ENCODE measurements at regions of chr17 and their contacts with region 1.

Region 1: GRCh38 chr17:2244545-2245525 is 58.8 kb downstream of the SMG6 start:
- DNase-seq: peak; percentile 87
- H3K4me3 ChIP-seq: no peak overlapping the region; a peak in 1 of 4 replicates
- H3K27ac ChIP-seq: peak overlapping the region; percentile 18 to 67; a peak in 3 of 4 replicates
- H3K4me1 ChIP-seq: peaks cover 7 to 15% of the 10 kb centered on the region in 2 experiments; a peak in 1 of 4 replicates
- H3K27me3 ChIP-seq: no peaks in the 10 kb centered on the region
- CTCF ChIP-seq: peak; percentile 96
- EP300 ChIP-seq: no peak
- RAD21 ChIP-seq: peak; percentile 98

Region 2: GRCh38 chr17:2049333-2050299 is 195.2 kb before region 1 on chr17:
- CTCF ChIA-PET with region 1: interaction called, 185 read pairs
- POLR2A ChIA-PET with region 1: interaction called, 9 read pairs
- DNase-seq: peak; percentile 95
- H3K4me3 ChIP-seq: peak overlapping the region; percentile 75 to 80
- H3K27ac ChIP-seq: peak overlapping the region; percentile 60 to 72
- H3K4me1 ChIP-seq: peaks cover 4 to 15% of the 10 kb centered on the region in 2 experiments; a peak in 2 of 4 replicates
- H3K27me3 ChIP-seq: no peaks in the 10 kb centered on the region
- CTCF ChIP-seq: no peak
- EP300 ChIP-seq: no peak
- RAD21 ChIP-seq: no peak

Region 3: DNA sequence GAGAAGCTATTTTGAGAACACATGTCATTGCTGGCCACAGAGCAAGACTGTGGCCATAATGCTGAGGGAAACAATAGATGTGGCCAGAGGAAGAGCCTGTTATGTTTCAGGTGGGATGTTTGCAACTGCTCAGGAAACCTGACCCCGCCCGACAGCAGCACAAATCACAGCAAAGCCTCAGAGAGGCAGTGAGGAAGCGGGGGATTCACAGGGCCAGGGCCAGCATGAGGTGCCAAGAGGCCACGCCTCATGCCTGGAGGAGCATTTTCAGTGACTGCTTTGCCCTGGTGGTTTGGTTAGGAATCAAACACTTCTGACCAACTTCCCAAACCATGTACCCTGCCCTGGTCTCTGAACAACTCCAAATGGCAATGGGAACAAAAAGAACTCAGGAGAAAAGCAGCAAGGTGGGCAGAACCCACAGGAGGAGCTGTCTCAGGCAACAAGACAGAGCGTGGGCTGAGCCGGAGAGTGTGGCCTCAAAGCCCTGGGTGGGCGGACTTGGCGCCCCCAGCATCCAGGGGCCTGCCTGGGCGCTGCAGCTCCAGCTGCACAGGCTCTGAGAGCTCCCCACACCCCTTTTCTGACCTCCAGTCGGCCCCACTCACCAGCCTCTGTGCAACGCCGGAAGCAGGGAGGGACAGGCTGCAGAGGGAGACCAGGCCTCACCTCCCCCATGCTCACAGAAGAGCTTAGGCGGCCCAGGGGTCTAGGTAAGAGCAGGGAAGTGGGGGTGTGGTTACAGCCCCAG is 169.3 kb before region 1 on chr17:
- CTCF ChIA-PET with region 1: interaction called, 25 read pairs
- POLR2A ChIA-PET with region 1: no interaction called
- DNase-seq: peak; percentile 78
- H3K4me3 ChIP-seq: no peak overlapping the region
- H3K27ac ChIP-seq: peak overlapping the region in 1 of 2 experiments; percentile 95; a peak in 2 of 4 replicates
- H3K4me1 ChIP-seq: peaks cover 0 to 46% of the 10 kb centered on the region in 2 experiments; a peak in 1 of 4 replicates
- H3K27me3 ChIP-seq: no peaks in the 10 kb centered on the region
- CTCF ChIP-seq: no peak
- EP300 ChIP-seq: peak in 1 of 2 experiments; percentile 44; a peak in 1 of 4 replicates
- RAD21 ChIP-seq: peak; percentile 30; the same call in 1 of the 2 replicates

Region 4: GRCh38 chr17:2137342-2138098 is 107.3 kb before region 1 on chr17:
- CTCF ChIA-PET with region 1: interaction called, 14 read pairs
- POLR2A ChIA-PET with region 1: no interaction called
- DNase-seq: no peak
- H3K4me3 ChIP-seq: no peak overlapping the region
- H3K27ac ChIP-seq: peak overlapping the region; percentile 69 to 85; a peak in 3 of 4 replicates
- H3K4me1 ChIP-seq: peaks cover 24 to 26% of the 10 kb centered on the region in 2 experiments
- H3K27me3 ChIP-seq: no peaks in the 10 kb centered on the region
- CTCF ChIP-seq: no peak
- EP300 ChIP-seq: no peak
- RAD21 ChIP-seq: no peak

Region 5: DNA sequence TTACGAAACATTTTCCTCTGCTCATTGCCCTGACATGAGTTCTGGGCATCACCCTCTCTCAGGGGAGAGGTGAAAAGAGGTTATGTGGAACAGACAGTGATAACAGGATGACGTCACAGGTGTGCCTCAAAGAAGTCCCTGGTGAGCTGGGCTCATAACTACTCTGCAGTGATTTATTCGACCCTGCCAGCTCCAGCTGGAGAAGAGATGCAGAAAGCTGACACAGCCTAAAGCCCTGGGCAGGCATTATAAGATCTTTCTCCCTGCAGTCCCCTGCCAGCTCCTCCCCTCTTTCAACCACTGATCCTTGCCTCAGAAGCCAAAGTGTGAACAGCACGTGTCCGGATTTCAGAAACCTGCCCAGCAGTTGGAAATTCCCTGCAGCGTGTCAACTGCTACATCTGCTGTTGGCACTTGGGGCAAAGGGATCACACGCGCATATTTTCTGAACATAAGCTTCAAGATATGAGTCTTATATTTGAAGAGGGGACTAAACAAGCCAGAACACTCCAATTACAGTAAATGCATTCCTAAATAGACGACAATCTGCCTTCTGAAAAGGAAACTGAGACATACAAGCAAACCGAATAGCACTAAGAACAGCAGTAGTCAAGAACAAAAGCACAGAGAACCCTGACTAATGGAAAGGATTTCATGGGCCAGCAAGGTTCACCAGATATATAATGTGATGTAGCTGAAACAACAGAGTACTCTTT is 21.8 kb before region 1 on chr17:
- CTCF ChIA-PET with region 1: interaction called, 22 read pairs
- POLR2A ChIA-PET with region 1: no interaction called
- DNase-seq: no peak
- H3K4me3 ChIP-seq: no peak overlapping the region
- H3K27ac ChIP-seq: peak overlapping the region in 1 of 2 experiments; percentile 24; a peak in 1 of 4 replicates
- H3K4me1 ChIP-seq: peaks cover 7 to 15% of the 10 kb centered on the region in 2 experiments; a peak in 3 of 4 replicates
- H3K27me3 ChIP-seq: no peaks in the 10 kb centered on the region
- CTCF ChIP-seq: no peak
- EP300 ChIP-seq: no peak
- RAD21 ChIP-seq: no peak

Region 6: DNA sequence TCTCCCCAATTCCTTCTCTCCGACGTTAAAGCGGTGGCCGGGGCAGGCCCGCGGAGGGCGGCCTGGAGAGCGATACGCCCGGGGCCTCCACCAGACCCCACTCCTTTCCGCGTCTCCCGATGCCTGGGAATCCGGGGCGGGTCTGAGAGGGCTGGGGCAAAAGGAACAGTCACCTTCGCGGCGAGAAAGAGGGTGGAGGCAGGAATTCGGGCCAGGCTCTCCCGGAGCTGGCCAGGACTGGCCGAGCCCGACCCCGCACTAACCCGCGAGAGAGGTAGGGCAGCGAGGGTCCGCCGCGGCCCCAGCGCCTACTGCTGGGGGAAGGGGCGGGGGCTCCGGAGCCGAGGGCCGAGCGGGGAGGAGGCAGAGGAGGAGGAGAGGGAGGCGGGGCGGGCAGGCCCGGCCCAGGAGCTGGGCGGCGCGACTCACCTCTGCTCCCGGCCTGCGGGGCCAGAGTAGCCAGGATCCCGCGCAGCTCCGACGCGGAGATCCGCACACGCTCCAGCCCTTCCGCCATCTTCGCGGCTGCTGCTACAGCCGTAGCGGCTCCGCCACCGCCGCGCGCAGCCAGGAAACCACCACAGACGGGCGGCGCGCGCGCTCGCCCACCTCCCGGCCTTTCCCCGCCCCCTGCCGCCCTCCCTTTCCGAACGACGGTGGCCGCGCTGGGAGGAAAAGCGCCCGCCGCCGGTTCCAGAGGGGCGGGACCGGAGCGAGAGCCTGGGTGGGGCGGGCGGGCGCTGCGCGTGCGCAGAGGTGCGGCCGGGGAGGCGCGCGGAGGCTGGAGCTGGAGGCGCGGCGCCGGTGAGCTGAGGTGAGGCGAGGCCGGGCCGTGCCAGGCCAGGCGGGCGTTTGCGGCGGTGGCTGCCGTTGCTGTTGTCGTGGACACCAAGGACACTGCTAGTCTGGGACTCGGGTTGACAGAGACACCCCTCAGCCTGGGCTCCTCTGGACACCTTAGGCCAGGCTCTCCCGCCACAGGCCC is 58.7 kb after region 1 on chr17 and contains the starts of genes SMG6 and SRR:
- CTCF ChIA-PET with region 1: interaction called, 10 read pairs
- POLR2A ChIA-PET with region 1: no interaction called
- DNase-seq: peak; percentile 100
- H3K4me3 ChIP-seq: peak within 1 kb of the TSS; percentile 72 to 80
- H3K27ac ChIP-seq: peak within 1 kb of the TSS; percentile 82 to 95
- H3K4me1 ChIP-seq: peaks cover 5 to 6% of the 10 kb centered on the region in 2 experiments; a peak in 2 of 4 replicates
- H3K27me3 ChIP-seq: no peaks in the 10 kb centered on the region
- CTCF ChIP-seq: no peak
- EP300 ChIP-seq: no peak
- RAD21 ChIP-seq: no peak
- polyA plus RNA-seq, gene SMG6: 9.5 and 15.7 TPM in 2 replicates
- polyA plus RNA-seq, gene SRR: 18.5 and 20.2 TPM in 2 replicates

Region 7: DNA sequence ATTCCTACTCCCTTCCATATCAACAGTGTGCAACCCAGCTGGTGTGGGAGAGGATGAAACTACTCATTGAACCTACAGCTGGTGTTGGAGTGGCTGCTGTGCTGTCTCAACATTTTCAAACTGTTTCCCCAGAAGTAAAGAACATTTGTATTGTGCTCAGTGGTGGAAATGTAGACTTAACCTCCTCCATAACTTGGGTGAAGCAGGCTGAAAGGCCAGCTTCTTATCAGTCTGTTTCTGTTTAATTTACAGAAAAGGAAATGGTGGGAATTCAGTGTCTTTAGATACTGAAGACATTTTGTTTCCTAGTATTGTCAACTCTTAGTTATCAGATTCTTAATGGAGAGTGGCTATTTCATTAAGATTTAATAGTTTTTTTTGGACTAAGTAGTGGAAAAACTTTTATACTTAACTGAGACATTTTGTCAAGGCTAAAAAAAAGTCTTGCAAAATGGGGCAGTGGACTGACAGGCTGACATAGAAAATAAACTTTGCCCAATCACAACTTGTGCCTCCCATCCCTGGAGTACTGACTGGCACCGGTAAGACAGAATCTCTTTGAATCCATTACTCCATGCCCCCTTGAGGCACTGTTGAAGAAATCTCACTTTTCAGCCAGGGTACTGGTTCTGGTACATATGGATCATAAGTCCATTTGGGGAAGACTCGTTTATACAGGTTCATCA is 78.9 kb after region 1 on chr17:
- CTCF ChIA-PET with region 1: no interaction called
- POLR2A ChIA-PET with region 1: no interaction called
- DNase-seq: no peak
- H3K4me3 ChIP-seq: no peak overlapping the region
- H3K27ac ChIP-seq: no peak overlapping the region
- H3K4me1 ChIP-seq: no peaks in the 10 kb centered on the region
- H3K27me3 ChIP-seq: no peaks in the 10 kb centered on the region
- CTCF ChIP-seq: no peak
- EP300 ChIP-seq: no peak
- RAD21 ChIP-seq: no peak

Region 8: GRCh38 chr17:2547176-2547575 is 302.3 kb after region 1 on chr17:
- CTCF ChIA-PET with region 1: no interaction called
- POLR2A ChIA-PET with region 1: no interaction called
- DNase-seq: peak; percentile 54
- H3K4me3 ChIP-seq: no peak overlapping the region
- H3K27ac ChIP-seq: no peak overlapping the region
- H3K4me1 ChIP-seq: no peaks in the 10 kb centered on the region
- H3K27me3 ChIP-seq: no peaks in the 10 kb centered on the region; the same call in 1 of the 2 replicates
- CTCF ChIP-seq: no peak
- EP300 ChIP-seq: no peak
- RAD21 ChIP-seq: no peak

Measured in SK-N-SH (cell line).